Naive thymus-derived CD4-positive, alpha-beta T cell (primary cell): ENCODE measurements at regions of chr12 and their contacts with region 1.

Region 1: DNA sequence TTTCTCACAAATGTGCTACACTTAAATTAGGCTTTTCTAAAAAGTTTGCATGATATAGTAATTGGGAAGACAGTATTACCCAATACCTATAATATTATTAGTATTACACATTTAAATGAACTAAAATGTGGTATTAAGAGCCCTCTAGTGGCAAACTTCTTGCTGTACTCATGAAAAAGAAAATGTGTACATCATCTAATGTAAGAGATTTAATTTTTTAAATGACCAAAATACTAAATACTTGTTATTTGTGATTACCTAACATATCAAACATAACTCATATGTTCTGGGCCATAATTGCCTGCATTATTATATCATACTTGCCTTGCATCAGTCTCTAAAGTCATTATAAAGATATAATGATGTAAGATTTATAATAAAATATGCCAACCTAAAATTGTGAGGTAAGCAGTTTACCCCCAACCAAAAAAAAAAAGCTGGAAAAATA is 64.2 kb downstream of the DNAI7 start:
- DNase-seq: peak in 6 of 9 donors; percentile 21 to 54 (median 38)
- ATAC-seq: no peak
- H3K4me3 ChIP-seq: no peak overlapping the region
- H3K4me3 Mint-ChIP-seq: no peak overlapping the region
- H3K27ac ChIP-seq: no peak overlapping the region
- H3K27ac Mint-ChIP-seq: no peak overlapping the region
- H3K4me1 ChIP-seq: no peaks in the 10 kb centered on the region
- H3K4me1 Mint-ChIP-seq: peaks cover 0 to 1% (median 0%) of the 10 kb centered on the region in 7 donors
- H3K27me3 ChIP-seq: no peaks in the 10 kb centered on the region
- H3K27me3 Mint-ChIP-seq: peaks cover 0 to 7% (median 0%) of the 10 kb centered on the region in 5 donors

Region 2: DNA sequence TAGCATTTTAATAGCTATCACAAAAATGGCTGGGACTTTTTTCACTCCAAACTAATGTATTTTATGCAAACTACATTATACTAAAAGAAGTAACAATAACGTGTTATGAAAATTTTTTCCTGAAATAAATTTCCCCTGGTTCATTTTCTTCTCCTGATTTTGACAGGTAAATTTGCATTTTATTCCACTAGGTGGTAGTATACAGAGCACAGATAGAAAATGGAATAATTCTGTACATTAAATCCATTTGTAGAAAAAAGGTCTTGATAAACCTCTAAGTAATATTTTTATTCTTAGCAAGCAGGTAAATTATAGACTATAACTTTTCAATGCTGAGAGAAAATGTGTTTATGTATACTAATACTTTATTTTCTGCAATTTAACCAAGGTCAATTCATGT is 278.3 kb before region 1 on chr12:
- CTCF ChIA-PET with region 1: interaction called, 4 read pairs
- POLR2A ChIA-PET with region 1: no interaction called
- intact Hi-C with region 1: loop called in 1 of 2 experiments (anchors 2 kb)
- DNase-seq: no peak
- ATAC-seq: no peak
- H3K4me3 ChIP-seq: no peak overlapping the region
- H3K4me3 Mint-ChIP-seq: no peak overlapping the region
- H3K27ac ChIP-seq: no peak overlapping the region
- H3K27ac Mint-ChIP-seq: no peak overlapping the region
- H3K4me1 ChIP-seq: no peaks in the 10 kb centered on the region
- H3K4me1 Mint-ChIP-seq: peaks cover 0 to 3% (median 0%) of the 10 kb centered on the region in 7 donors
- H3K27me3 ChIP-seq: no peaks in the 10 kb centered on the region
- H3K27me3 Mint-ChIP-seq: peaks cover 4 to 10% (median 6%) of the 10 kb centered on the region in 5 donors

Region 3: DNA sequence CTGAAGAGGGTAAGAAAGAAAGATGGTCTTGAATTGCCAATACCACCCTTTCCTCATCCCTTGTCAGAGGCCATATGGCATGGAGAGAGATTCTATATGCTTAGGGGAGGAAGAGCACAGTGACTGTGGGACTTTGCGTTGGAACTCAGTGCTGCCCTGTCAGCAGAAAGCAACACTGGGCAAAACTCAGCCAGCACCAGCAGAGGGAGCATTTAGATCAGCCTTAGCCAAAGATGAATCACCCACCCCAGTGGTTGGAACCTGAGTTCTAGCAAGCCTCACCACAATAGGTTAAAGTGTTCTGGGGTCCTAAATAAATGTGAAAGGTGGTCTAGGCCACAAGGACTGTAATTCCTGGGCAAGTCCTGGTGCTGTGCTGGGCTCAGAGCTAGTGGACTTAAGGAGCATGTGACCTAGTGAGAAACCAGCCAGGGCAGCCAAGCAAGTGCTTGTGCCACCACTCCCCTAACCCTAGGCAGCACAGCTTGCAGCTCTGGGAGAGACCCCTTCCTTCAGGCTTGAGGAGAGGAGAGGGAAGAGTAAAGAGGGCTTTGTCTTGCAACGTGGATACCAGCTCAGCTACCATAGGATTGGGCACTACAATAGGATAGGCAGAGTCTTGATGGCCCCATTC is 170.4 kb before region 1 on chr12:
- CTCF ChIA-PET with region 1: no interaction called
- POLR2A ChIA-PET with region 1: no interaction called
- intact Hi-C with region 1: no loop called
- DNase-seq: peak in 1 of 9 donors; percentile 44
- ATAC-seq: peak; percentile 69
- H3K4me3 ChIP-seq: no peak overlapping the region
- H3K4me3 Mint-ChIP-seq: no peak overlapping the region
- H3K27ac ChIP-seq: no peak overlapping the region
- H3K27ac Mint-ChIP-seq: no peak overlapping the region
- H3K4me1 ChIP-seq: no peaks in the 10 kb centered on the region
- H3K4me1 Mint-ChIP-seq: peaks cover 0 to 10% (median 0%) of the 10 kb centered on the region in 7 donors
- H3K27me3 ChIP-seq: no peaks in the 10 kb centered on the region
- H3K27me3 Mint-ChIP-seq: peaks cover 0 to 33% (median 13%) of the 10 kb centered on the region in 5 donors

Region 4: DNA sequence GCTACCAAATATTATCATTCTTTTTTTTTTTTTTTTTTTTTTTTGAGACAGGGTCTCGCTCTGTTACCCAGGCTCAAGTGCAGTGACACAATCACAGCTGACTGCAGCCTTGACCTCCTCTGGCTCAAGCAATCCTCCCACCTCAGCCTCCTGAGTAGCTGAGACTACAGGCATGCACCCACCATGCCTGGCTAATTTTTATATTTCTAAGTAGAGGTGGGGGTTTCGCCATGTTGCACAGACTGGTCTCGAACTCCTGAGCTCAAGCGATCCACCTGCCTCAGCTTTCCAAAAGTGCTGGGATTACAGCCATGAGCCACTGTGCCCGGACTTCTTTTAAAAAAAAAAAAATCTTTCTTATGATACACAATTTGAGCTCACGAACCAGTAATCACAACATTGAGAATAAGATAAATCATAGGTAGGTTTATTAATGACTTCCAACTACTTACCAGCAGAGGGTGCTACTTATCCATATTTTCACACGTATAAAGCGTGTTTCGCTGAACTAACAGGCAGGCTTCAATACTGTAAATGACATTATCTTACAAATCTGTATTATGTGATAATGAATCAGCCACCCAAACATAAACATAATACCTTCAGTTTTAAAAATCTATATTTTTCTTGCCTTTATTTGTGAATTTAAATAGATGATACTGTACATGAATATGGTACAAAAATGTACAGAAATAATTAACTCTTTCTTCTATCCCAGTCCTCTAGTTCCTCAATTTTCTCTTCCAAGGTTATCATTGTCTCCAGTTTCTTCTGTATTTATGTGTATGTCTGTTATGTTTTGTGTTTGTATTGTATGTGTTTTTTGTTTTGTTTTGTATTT is 139.3 kb before region 1 on chr12:
- CTCF ChIA-PET with region 1: interaction called, 59 read pairs
- POLR2A ChIA-PET with region 1: no interaction called
- intact Hi-C with region 1: loop called (anchors 1 kb)
- DNase-seq: peak in 7 of 9 donors; percentile 53 to 75 (median 64)
- ATAC-seq: peak; percentile 97
- H3K4me3 ChIP-seq: no peak overlapping the region
- H3K4me3 Mint-ChIP-seq: no peak overlapping the region
- H3K27ac ChIP-seq: no peak overlapping the region
- H3K27ac Mint-ChIP-seq: no peak overlapping the region
- H3K4me1 ChIP-seq: no peaks in the 10 kb centered on the region
- H3K4me1 Mint-ChIP-seq: peaks cover 0 to 2% (median 0%) of the 10 kb centered on the region in 7 donors
- H3K27me3 ChIP-seq: no peaks in the 10 kb centered on the region
- H3K27me3 Mint-ChIP-seq: peaks cover 0 to 7% (median 6%) of the 10 kb centered on the region in 5 donors

Region 5: DNA sequence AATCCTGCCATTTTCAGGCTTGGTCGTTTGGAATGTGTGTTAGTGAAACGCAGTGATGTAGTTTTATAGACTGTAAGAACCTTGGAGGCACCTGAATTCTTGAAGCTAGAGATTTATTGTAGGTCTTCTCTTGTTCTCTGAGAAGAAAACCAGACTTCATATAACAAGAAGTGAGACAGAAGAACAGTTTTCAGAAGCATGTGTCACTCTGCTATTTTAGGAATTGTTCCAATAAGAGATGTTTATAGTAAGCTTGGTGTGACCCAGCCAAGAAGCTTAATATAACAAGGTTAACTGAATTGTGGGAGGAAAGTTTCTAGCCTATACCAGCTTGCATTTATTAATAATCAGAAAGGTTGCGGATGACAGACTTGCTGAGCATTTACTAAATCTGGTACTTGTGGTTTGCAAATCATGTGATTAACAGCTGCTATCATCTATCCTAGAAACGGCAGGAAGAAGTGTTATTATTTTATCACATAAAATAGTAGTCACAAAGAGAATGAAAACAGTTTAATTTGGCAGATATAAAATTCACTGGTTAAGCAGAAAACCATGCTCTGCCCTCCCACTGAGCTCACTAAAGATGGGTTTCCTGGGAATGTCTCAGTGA is 132.7 kb before region 1 on chr12:
- CTCF ChIA-PET with region 1: interaction called, 59 read pairs
- POLR2A ChIA-PET with region 1: no interaction called
- intact Hi-C with region 1: no loop called
- DNase-seq: no peak
- ATAC-seq: peak; percentile 54
- H3K4me3 ChIP-seq: no peak overlapping the region
- H3K4me3 Mint-ChIP-seq: no peak overlapping the region
- H3K27ac ChIP-seq: no peak overlapping the region
- H3K27ac Mint-ChIP-seq: peak overlapping the region in 1 of 9 donors; percentile 24
- H3K4me1 ChIP-seq: peaks cover 0 to 11% of the 10 kb centered on the region in 2 donors
- H3K4me1 Mint-ChIP-seq: peaks cover 0 to 16% (median 9%) of the 10 kb centered on the region in 7 donors
- H3K27me3 ChIP-seq: no peaks in the 10 kb centered on the region
- H3K27me3 Mint-ChIP-seq: peaks cover 0 to 18% (median 0%) of the 10 kb centered on the region in 5 donors

Region 6: DNA sequence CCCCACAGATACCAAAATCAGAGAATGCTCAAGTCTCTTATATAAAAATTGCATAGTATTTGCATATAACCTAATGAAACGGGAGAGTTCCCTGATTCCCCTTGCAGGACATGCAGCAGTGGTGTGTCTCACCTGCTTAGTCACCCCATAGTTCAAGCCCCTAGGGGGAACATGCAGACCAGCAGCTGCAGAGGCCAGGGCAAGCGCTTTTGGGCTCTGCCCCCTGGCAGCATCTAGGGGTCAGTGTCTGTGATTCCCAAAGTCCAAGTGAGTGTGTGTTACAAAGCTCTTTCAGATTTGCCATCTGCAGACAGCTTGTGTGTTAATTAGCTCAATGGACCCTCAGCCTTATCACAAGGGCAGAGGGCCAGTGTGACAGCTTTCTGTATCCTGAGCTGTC is 45.9 kb before region 1 on chr12:
- CTCF ChIA-PET with region 1: no interaction called
- POLR2A ChIA-PET with region 1: no interaction called
- intact Hi-C with region 1: no loop called
- DNase-seq: no peak
- ATAC-seq: no peak
- H3K4me3 ChIP-seq: no peak overlapping the region
- H3K4me3 Mint-ChIP-seq: no peak overlapping the region
- H3K27ac ChIP-seq: no peak overlapping the region
- H3K27ac Mint-ChIP-seq: peak overlapping the region in 1 of 9 donors; percentile 26
- H3K4me1 ChIP-seq: no peaks in the 10 kb centered on the region
- H3K4me1 Mint-ChIP-seq: peaks cover 7 to 27% (median 8%) of the 10 kb centered on the region in 7 donors
- H3K27me3 ChIP-seq: no peaks in the 10 kb centered on the region
- H3K27me3 Mint-ChIP-seq: no peaks in the 10 kb centered on the region

Region 7: DNA sequence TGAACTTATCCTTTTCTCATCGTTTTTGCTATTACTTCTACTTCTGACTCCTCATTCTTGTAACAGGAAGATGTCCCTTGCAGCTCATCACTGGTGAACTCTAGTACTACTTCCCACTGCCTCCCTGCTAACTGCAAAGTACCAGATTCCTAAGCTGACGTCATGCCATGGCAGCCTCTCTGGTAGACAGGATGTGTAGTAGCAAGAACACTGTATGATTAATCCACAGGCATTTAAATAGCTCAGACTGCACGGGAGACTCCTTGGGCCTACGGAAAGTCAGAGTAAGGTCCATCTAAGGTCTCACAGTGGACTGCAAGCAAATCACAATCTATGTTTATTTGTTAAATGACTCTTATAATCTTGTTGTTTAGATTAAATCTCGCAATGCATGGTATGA is 20.7 kb after region 1 on chr12:
- CTCF ChIA-PET with region 1: interaction called, 7 read pairs
- POLR2A ChIA-PET with region 1: no interaction called
- intact Hi-C with region 1: loop called in 1 of 2 experiments (anchors 1 kb)
- DNase-seq: no peak
- ATAC-seq: no peak
- H3K4me3 ChIP-seq: no peak overlapping the region
- H3K4me3 Mint-ChIP-seq: no peak overlapping the region
- H3K27ac ChIP-seq: no peak overlapping the region
- H3K27ac Mint-ChIP-seq: peak overlapping the region in 1 of 9 donors; percentile 0
- H3K4me1 ChIP-seq: no peaks in the 10 kb centered on the region
- H3K4me1 Mint-ChIP-seq: peaks cover 0 to 7% (median 6%) of the 10 kb centered on the region in 7 donors
- H3K27me3 ChIP-seq: no peaks in the 10 kb centered on the region
- H3K27me3 Mint-ChIP-seq: peaks cover 0 to 3% (median 0%) of the 10 kb centered on the region in 5 donors